Calu3 (cell line): ENCODE measurements at regions of chr1 and their contacts with region 1.

Region 1: GRCh38 chr1:52296345-52296744 is 69.7 kb downstream of the CC2D1B start:
- DNase-seq: peak; percentile 21
- H3K4me3 Mint-ChIP-seq: no peak overlapping the region
- H3K27ac Mint-ChIP-seq: no peak overlapping the region
- H3K4me1 Mint-ChIP-seq: no peaks in the 10 kb centered on the region
- H3K27me3 Mint-ChIP-seq: no peaks in the 10 kb centered on the region
- CTCF ChIP-seq: no peak

Region 2: DNA sequence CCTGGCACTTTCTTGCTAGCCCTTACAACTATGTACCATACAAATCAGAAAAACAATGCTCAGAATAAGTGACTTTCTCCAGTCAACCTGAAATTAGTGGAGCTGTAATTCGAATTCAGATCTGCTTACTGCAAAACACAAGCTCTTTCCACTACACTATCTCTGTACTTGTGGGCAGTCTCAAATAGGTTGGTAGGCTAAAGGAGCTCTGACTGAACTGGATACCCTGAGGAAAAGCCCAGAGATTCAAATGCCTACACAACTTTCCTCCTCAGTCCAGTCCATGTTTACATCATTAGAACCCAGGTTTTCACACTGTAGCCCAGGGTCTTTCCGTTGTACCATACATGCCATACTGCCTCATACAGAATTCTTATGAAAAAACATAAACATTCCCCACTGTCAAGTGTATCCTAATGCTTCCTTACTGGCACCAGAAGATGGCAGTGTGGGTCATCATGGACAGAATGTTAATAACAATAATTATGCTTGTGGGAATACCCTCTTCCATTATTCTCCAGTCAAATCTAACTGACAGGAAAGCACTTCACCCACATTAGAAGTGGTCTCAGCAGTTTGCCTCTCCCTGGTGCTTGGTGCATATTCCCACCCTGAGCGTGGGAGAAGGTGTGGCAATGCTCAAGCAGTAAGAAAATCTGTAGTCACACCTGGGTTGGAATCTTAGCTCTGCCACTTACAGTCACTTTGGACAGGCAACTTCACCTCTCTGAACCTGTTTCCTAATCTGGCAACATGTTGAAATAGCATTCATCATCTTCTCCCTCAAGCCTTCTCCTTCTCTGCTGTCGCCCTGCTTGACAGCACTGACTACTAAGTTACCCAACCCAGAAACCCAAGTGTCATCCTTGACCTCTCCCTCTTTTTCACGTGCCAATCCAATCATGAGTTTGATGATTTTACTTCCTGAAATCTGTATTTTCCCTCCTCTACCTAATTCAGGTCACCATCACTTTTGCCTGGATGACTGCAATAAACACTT is 168.9 kb before region 1 on chr1:
- CTCF ChIA-PET with region 1: interaction called, 3 read pairs
- intact Hi-C with region 1: loop called (anchors 1 kb)
- DNase-seq: peak; percentile 47
- H3K4me3 Mint-ChIP-seq: no peak overlapping the region
- H3K27ac Mint-ChIP-seq: no peak overlapping the region
- H3K4me1 Mint-ChIP-seq: no peaks in the 10 kb centered on the region
- H3K27me3 Mint-ChIP-seq: peaks cover 58% of the 10 kb centered on the region
- CTCF ChIP-seq: peak; percentile 51

Region 3: GRCh38 chr1:52141513-52142219 is 154.7 kb before region 1 on chr1 and contains the start of gene ZFYVE9:
- CTCF ChIA-PET with region 1: interaction called, 3 read pairs
- intact Hi-C with region 1: loop called (anchors 1 kb)
- DNase-seq: peak; percentile 90
- H3K4me3 Mint-ChIP-seq: peak within 1 kb of the TSS; percentile 79
- H3K27ac Mint-ChIP-seq: peak within 1 kb of the TSS; percentile 56
- H3K4me1 Mint-ChIP-seq: peaks cover 18% of the 10 kb centered on the region
- H3K27me3 Mint-ChIP-seq: no peaks in the 10 kb centered on the region
- CTCF ChIP-seq: peak; percentile 65
- total RNA-seq, gene ZFYVE9: 9.0 and 13.6 TPM in 2 replicates

Region 4: GRCh38 chr1:52179085-52179484 is 117.3 kb before region 1 on chr1:
- CTCF ChIA-PET with region 1: no interaction called
- intact Hi-C with region 1: no loop called
- DNase-seq: no peak
- H3K4me3 Mint-ChIP-seq: no peak overlapping the region
- H3K27ac Mint-ChIP-seq: no peak overlapping the region
- H3K4me1 Mint-ChIP-seq: peaks cover 12% of the 10 kb centered on the region
- H3K27me3 Mint-ChIP-seq: no peaks in the 10 kb centered on the region
- CTCF ChIP-seq: no peak

Region 5: DNA sequence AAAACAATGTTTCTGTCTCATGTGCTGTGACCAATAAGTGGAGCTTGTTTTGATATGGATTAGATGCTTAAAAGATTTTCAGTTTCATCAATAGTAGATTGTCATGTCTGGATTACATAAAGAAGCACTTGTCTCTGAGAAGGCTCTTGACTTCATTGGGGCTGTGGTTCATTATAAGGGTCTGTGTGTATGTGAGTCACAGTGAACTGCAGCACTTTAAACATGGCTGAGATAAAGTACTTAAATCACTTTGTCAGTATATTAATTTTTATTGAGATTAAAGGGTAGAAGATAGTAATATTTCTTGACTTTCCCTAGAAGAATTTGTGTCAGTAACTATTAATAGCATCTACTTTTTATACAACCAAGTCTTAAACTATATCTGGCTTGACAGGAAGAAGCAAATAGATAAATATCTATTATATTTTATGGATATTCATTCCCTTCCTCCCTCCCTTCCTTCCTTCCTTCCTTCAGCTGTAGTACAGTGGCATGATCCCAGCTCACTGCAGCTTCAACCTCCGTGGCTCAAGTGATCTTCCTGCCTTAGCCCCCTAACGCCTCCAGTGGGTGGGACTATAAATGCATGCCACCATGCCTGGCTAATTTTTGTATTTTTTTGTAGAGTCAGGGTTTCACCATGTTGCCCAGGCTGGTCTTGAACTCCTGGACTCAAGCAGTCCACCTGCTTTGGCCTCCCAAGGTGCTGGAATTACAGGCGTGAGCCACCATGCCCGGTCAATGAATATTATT is 105.7 kb before region 1 on chr1:
- CTCF ChIA-PET with region 1: no interaction called
- intact Hi-C with region 1: no loop called
- DNase-seq: no peak
- H3K4me3 Mint-ChIP-seq: no peak overlapping the region
- H3K27ac Mint-ChIP-seq: no peak overlapping the region
- H3K4me1 Mint-ChIP-seq: no peaks in the 10 kb centered on the region
- H3K27me3 Mint-ChIP-seq: no peaks in the 10 kb centered on the region
- CTCF ChIP-seq: no peak

Region 6: DNA sequence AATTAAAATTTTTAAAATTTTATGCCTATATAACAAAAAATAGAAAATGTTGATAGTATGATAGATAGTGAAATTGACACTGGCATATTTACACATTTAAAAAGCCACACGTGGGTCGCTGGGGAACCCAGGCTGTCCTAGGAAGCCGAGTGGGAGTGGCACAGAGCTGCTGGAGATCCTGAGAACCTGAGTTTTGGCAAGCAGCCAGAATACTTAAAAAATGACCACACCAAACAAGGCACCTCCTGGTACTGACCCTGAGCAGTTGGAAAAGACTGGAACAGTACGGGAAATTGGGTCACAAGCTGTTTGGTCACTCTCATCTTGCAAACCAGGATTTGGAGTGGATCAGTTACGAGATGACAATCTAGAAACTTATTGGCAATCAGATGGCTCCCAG is 42.9 kb before region 1 on chr1:
- CTCF ChIA-PET with region 1: no interaction called
- intact Hi-C with region 1: no loop called
- DNase-seq: no peak
- H3K4me3 Mint-ChIP-seq: no peak overlapping the region
- H3K27ac Mint-ChIP-seq: no peak overlapping the region
- H3K4me1 Mint-ChIP-seq: no peaks in the 10 kb centered on the region
- H3K27me3 Mint-ChIP-seq: no peaks in the 10 kb centered on the region
- CTCF ChIP-seq: no peak